HCT116 (cell line): ENCODE measurements at regions of chr5 and their contacts with region 1.

Region 1: DNA sequence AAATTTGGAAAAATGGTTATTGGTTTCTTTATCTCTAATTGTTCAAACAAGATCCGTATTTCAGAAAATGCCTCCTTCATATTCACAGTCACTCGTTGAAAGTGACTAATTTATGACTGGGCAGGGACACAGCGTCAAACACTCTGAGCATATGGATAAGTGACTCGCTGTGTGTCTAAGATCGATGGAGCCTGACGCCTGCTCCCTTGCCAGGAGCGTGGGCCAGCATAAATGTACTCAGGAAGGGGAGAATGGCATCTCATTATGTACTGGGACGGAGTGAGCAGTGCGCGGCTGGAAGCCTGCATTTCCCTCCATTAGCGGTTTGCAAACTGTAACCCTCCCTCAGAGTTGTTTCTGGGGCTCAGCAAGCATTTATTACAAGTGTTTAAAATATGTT is 79.8 kb upstream of the CAST start:
- DNase-seq: no peak
- ATAC-seq: peak; percentile 55
- H3K4me3 ChIP-seq: no peak overlapping the region
- H3K27ac ChIP-seq: no peak overlapping the region
- H3K4me1 ChIP-seq: peaks cover 0 to 4% of the 10 kb centered on the region in 2 experiments; a peak in 1 of 4 replicates
- H3K27me3 ChIP-seq: 0 out of 2 replicates have a peak, but pooled peaks cover 4% of the 10 kb centered on the region
- CTCF ChIP-seq: no peak
- POLR2A ChIP-seq: no peak
- RAD21 ChIP-seq: no peak

Region 2: GRCh38 chr5:96595300-96596090 is 13.2 kb after region 1 on chr5:
- CTCF ChIA-PET with region 1: interaction called, 17 read pairs
- POLR2A ChIA-PET with region 1: no interaction called
- RAD21 ChIA-PET with region 1: no interaction called
- intact Hi-C with region 1: no loop called
- DNase-seq: no peak
- ATAC-seq: peak; percentile 78
- H3K4me3 ChIP-seq: no peak overlapping the region
- H3K27ac ChIP-seq: no peak overlapping the region
- H3K4me1 ChIP-seq: no peaks in the 10 kb centered on the region
- H3K27me3 ChIP-seq: 0 out of 2 replicates have a peak, but pooled peaks cover 4% of the 10 kb centered on the region
- CTCF ChIP-seq: peak; percentile 29 to 77 (median 57); a peak in 4 of 6 replicates
- POLR2A ChIP-seq: no peak
- RAD21 ChIP-seq: peak; percentile 34; the same call in 1 of the 2 replicates